ENCODE measurements at regions of chr5 and their contacts with region 1.

Region 1: DNA sequence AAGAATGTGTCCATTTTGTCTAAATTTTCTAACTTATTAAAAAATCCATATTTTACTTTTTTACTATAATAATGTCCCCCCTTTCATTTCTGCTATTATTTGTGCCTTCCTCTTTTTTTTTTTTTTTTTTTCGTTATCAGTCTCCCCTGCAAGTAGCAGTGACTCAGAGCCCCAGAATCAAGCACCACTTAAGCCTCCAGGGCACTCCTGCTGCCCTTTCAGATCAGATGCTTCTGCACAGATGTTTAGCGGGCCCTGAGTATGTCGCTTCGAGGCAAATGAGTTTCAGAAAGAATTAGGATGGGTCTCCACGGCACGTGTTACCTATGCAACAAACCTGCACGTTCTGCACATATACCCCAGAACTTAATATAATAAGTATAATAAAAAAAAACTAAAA is 11.7 kb downstream of the MED7 start:
- DNase-seq: no peak
- H3K4me3 Mint-ChIP-seq: no peak overlapping the region
- H3K27ac Mint-ChIP-seq: no peak overlapping the region
- H3K4me1 Mint-ChIP-seq: peaks cover 41% of the 10 kb centered on the region
- H3K27me3 Mint-ChIP-seq: no peaks in the 10 kb centered on the region

Region 2: GRCh38 chr5:155616779-155617392 is 1514.0 kb before region 1 on chr5:
- intact Hi-C with region 1: loop called (anchors 1 kb)
- DNase-seq: peak; percentile 34
- H3K4me3 Mint-ChIP-seq: no peak overlapping the region
- H3K27ac Mint-ChIP-seq: no peak overlapping the region
- H3K4me1 Mint-ChIP-seq: no peaks in the 10 kb centered on the region
- H3K27me3 Mint-ChIP-seq: peaks cover 7% of the 10 kb centered on the region

Region 3: GRCh38 chr5:155943516-155944407 is 1187.2 kb before region 1 on chr5:
- intact Hi-C with region 1: loop called (anchors 1 kb)
- DNase-seq: peak; percentile 19
- H3K4me3 Mint-ChIP-seq: no peak overlapping the region
- H3K27ac Mint-ChIP-seq: no peak overlapping the region
- H3K4me1 Mint-ChIP-seq: peaks cover 7% of the 10 kb centered on the region
- H3K27me3 Mint-ChIP-seq: peaks cover 14% of the 10 kb centered on the region

Region 4: DNA sequence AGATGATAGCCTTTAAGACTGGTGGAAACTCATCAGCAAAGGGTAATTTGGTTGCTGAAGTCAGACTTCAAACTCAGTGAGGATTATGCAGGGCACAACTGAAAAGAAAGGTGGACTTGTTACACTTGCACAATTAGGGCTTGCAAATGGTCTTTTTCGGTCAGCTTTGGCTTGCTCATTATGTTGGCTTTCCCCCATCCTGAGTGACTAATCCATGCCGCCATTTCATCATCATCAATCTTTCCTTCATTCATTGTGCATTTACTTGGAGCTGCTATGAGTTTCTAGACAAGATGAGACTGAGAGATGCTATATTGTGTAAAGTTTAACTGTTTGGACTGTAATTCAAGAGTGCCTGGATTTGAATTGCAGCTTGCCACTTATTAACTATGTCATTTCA is 415.6 kb before region 1 on chr5:
- intact Hi-C with region 1: loop called (anchors 10 kb)
- DNase-seq: no peak
- H3K4me3 Mint-ChIP-seq: no peak overlapping the region
- H3K27ac Mint-ChIP-seq: no peak overlapping the region
- H3K4me1 Mint-ChIP-seq: no peaks in the 10 kb centered on the region
- H3K27me3 Mint-ChIP-seq: peaks cover 18% of the 10 kb centered on the region

Region 5: GRCh38 chr5:156893517-156893916 is 237.4 kb before region 1 on chr5:
- intact Hi-C with region 1: loop called (anchors 1 kb)
- DNase-seq: no peak
- H3K4me3 Mint-ChIP-seq: peak overlapping the region; percentile 32
- H3K27ac Mint-ChIP-seq: peak overlapping the region; percentile 94
- H3K4me1 Mint-ChIP-seq: peaks cover 60% of the 10 kb centered on the region
- H3K27me3 Mint-ChIP-seq: no peaks in the 10 kb centered on the region

Region 6: DNA sequence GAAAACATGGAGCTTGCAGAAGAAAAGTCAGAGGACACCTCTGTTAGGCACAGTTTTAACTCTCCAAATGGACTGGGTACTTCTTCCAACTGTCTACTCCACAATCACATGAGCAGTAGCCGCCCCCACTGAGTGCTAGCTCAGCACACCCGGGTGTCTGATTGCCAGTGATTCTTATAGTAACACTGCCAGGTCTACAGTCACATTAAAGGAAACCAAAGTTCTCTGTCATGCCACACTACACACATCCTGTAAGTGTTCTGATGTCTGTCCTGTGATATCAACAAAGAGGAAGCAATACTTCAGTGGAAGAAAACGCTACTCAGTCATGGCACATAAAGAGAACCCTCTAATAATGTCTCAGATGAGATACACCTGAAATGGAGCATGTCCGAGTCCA is 21.9 kb before region 1 on chr5 and contains the start of gene HAVCR2:
- intact Hi-C with region 1: loop called (anchors 1 kb)
- DNase-seq: peak; percentile 65
- H3K4me3 Mint-ChIP-seq: peak within 1 kb of the TSS; percentile 91
- H3K27ac Mint-ChIP-seq: peak within 1 kb of the TSS; percentile 94
- H3K4me1 Mint-ChIP-seq: peaks cover 63% of the 10 kb centered on the region
- H3K27me3 Mint-ChIP-seq: no peaks in the 10 kb centered on the region
- total RNA-seq, gene HAVCR2: 128 and 129 TPM in 2 replicates

Measured in activated T-helper 1 cell treated with anti-CD3 and anti-CD28 coated beads, Interleukin-12 subunit alpha, Interleukin-12 subunit beta, Interleukin-2, Interleukin-4 antibody, amounts not matched to agents 30 ng/mL and 10 ng/mL and 1 ng/mL, durations not matched to agents 14 hours and 24 hours and 36 hours (primary cell).